ENCODE measurements at regions of chr2 and their contacts with region 1.

Region 1: DNA sequence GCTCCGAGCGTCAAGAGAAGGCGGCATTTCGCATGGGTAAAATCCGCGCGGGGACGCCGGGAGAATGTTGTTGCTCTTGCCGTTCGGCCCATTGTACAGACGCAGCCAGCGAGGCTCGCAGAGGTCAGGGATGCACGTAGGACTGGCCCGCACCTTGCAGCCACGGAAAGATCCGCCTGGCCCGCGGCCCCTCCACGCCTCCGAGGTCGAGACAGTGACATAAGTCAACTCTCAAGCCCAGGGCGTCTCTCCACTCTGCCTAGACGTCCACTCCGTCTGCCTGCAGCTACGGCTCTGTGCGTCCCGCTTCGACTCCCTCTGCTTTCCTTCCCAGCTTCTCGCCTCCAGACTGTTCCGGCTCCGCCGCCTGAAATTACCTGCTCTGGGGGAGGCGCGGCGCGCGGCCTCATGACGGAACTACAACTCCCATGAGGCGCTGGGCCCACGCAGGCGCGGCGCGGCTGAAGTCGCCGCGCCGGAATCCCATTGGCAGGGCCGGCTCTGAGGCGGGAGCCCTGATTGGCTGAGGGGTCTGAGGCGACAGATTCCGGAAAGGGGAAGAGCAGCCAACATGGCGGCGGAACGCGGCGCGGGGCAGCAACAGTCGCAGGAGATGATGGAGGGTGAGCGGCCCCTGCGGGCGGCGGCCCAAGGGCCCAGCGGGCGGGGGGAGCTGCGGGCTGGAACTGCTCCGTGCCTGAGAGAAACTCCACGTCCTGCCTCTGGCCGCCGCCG is at the start of gene PPP1R7:
- DNase-seq: peak; percentile 88 to 98 (median 94)
- ATAC-seq: peak; percentile 80
- H3K4me3 ChIP-seq: peak within 1 kb of the TSS; percentile 93
- H3K4me3 Mint-ChIP-seq: peak within 1 kb of the TSS; percentile 97
- H3K27ac ChIP-seq: peak within 1 kb of the TSS; percentile 53 to 65
- H3K27ac Mint-ChIP-seq: peak within 1 kb of the TSS; percentile 89
- H3K4me1 ChIP-seq: peaks cover 36% of the 10 kb centered on the region
- H3K4me1 Mint-ChIP-seq: peaks cover 43% of the 10 kb centered on the region
- H3K27me3 ChIP-seq: no peaks in the 10 kb centered on the region
- H3K27me3 Mint-ChIP-seq: no peaks in the 10 kb centered on the region
- CTCF ChIP-seq: peak; percentile 61
- total RNA-seq, gene PPP1R7: 36.4 to 38.2 TPM

Region 2: GRCh38 chr2:240832205-240832727 is 317.8 kb before region 1 on chr2:
- CTCF ChIA-PET with region 1: interaction called, 3 read pairs
- POLR2A ChIA-PET with region 1: no interaction called
- intact Hi-C with region 1: loop called in 1 of 2 experiments (anchors 5 kb)
- DNase-seq: peak; percentile 98 to 100 (median 99)
- ATAC-seq: peak; percentile 91
- H3K4me3 ChIP-seq: peak overlapping the region; percentile 43
- H3K4me3 Mint-ChIP-seq: peak overlapping the region; percentile 38
- H3K27ac ChIP-seq: no peak overlapping the region
- H3K27ac Mint-ChIP-seq: no peak overlapping the region
- H3K4me1 ChIP-seq: peaks cover 14% of the 10 kb centered on the region
- H3K4me1 Mint-ChIP-seq: no peaks in the 10 kb centered on the region
- H3K27me3 ChIP-seq: peaks cover 17 to 26% of the 10 kb centered on the region in 2 experiments
- H3K27me3 Mint-ChIP-seq: peaks cover 36% of the 10 kb centered on the region
- CTCF ChIP-seq: no peak

Region 3: GRCh38 chr2:240983361-240983995 is 166.6 kb before region 1 on chr2:
- CTCF ChIA-PET with region 1: interaction called, 10 read pairs
- POLR2A ChIA-PET with region 1: interaction called, 10 read pairs
- intact Hi-C with region 1: loop called (anchors 5 kb)
- DNase-seq: peak in 12 of 14 experiments; percentile 3 to 74 (median 33)
- ATAC-seq: peak; percentile 93
- H3K4me3 ChIP-seq: no peak overlapping the region
- H3K4me3 Mint-ChIP-seq: no peak overlapping the region
- H3K27ac ChIP-seq: no peak overlapping the region
- H3K27ac Mint-ChIP-seq: no peak overlapping the region
- H3K4me1 ChIP-seq: peaks cover 6% of the 10 kb centered on the region
- H3K4me1 Mint-ChIP-seq: no peaks in the 10 kb centered on the region
- H3K27me3 ChIP-seq: no peaks in the 10 kb centered on the region
- H3K27me3 Mint-ChIP-seq: no peaks in the 10 kb centered on the region
- CTCF ChIP-seq: peak; percentile 65

Region 4: GRCh38 chr2:241096979-241097378 is 53.1 kb before region 1 on chr2:
- CTCF ChIA-PET with region 1: interaction called, 13 read pairs
- POLR2A ChIA-PET with region 1: interaction called, 73 read pairs
- intact Hi-C with region 1: loop called (anchors 1 to 2 kb)
- DNase-seq: no peak
- ATAC-seq: no peak
- H3K4me3 ChIP-seq: no peak overlapping the region
- H3K4me3 Mint-ChIP-seq: no peak overlapping the region
- H3K27ac ChIP-seq: peak overlapping the region in 1 of 2 donors; percentile 68
- H3K27ac Mint-ChIP-seq: peak overlapping the region; percentile 95
- H3K4me1 ChIP-seq: peaks cover 74% of the 10 kb centered on the region
- H3K4me1 Mint-ChIP-seq: peaks cover 79% of the 10 kb centered on the region
- H3K27me3 ChIP-seq: no peaks in the 10 kb centered on the region
- H3K27me3 Mint-ChIP-seq: no peaks in the 10 kb centered on the region
- CTCF ChIP-seq: no peak

Region 5: GRCh38 chr2:241315093-241315878 is 165.2 kb after region 1 on chr2 and contains the start of gene HDLBP:
- CTCF ChIA-PET with region 1: no interaction called
- POLR2A ChIA-PET with region 1: interaction called, 23 read pairs
- intact Hi-C with region 1: loop called in 1 of 2 experiments (anchors 2 kb)
- DNase-seq: peak; percentile 100
- ATAC-seq: peak; percentile 71
- H3K4me3 ChIP-seq: peak within 1 kb of the TSS; percentile 88
- H3K4me3 Mint-ChIP-seq: peak within 1 kb of the TSS; percentile 98
- H3K27ac ChIP-seq: peak within 1 kb of the TSS; percentile 96 to 98
- H3K27ac Mint-ChIP-seq: peak within 1 kb of the TSS; percentile 97
- H3K4me1 ChIP-seq: peaks cover 58% of the 10 kb centered on the region
- H3K4me1 Mint-ChIP-seq: peaks cover 83% of the 10 kb centered on the region
- H3K27me3 ChIP-seq: no peaks in the 10 kb centered on the region
- H3K27me3 Mint-ChIP-seq: no peaks in the 10 kb centered on the region
- CTCF ChIP-seq: peak; percentile 33
- total RNA-seq, gene HDLBP: 82.0 to 97.9 TPM

Region 6: DNA sequence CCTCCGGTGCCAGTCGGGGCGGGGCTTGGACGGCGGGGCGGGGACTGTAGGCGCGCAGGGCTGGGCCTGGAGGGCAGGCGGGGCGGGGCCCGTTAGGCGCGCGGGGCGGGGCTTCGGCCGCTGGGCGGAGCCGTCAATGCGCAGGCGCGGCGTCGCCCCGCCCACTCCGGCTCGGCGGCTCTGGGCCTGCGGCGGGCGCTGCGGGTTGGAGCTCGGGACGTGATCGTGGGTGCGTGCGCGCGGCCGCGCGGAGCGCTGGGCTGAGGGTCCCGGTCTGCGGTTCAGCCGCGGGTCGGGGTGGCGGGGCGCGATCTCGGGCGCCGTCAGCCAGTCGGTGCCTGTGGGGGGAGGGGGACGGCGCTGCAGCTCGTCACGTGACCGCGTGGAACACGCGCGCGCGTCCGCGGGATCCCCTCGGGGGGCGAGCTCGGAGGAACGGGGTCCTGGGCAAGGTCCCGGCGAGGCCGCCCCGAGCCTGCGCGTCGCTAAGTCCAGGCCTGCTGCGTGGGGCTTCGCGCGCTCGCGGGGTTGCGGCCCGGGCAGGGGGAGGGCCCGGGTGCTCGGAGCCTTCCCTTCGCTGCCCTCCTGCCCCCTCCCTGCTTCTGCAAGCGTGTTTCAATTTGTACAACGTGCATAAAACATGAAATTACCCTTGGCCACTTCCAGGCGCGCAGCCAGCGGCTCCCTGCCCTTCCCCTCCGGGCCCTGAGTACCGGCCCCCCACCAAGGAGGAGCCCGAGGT is 584.5 kb after region 1 on chr2 and contains the start of gene D2HGDH:
- CTCF ChIA-PET with region 1: no interaction called
- POLR2A ChIA-PET with region 1: no interaction called
- intact Hi-C with region 1: loop called in 1 of 2 experiments (anchors 10 kb)
- DNase-seq: peak; percentile 86 to 98 (median 94)
- ATAC-seq: peak; percentile 92
- H3K4me3 ChIP-seq: peak within 1 kb of the TSS; percentile 71
- H3K4me3 Mint-ChIP-seq: peak within 1 kb of the TSS; percentile 85
- H3K27ac ChIP-seq: peak within 1 kb of the TSS in 1 of 2 donors; percentile 71
- H3K27ac Mint-ChIP-seq: peak within 1 kb of the TSS; percentile 65
- H3K4me1 ChIP-seq: peaks cover 48% of the 10 kb centered on the region
- H3K4me1 Mint-ChIP-seq: peaks cover 12% of the 10 kb centered on the region
- H3K27me3 ChIP-seq: no peaks in the 10 kb centered on the region
- H3K27me3 Mint-ChIP-seq: no peaks in the 10 kb centered on the region
- CTCF ChIP-seq: no peak
- total RNA-seq, gene D2HGDH: 27.6 to 30.6 TPM

Measured in CD4-positive, alpha-beta T cell (primary cell).